Motor neuron (in vitro differentiated cells): ENCODE measurements at regions of chr4 and their contacts with region 1.

Region 1: GRCh38 chr4:86895692-86896488 is 3.7 kb upstream of the C4orf36 start:
- ATAC-seq: peak in 4 of 8 experiments; percentile 5 to 25 (median 14)
- H3K4me3 ChIP-seq: no peak overlapping the region
- H3K27ac ChIP-seq: no peak overlapping the region
- H3K4me1 ChIP-seq: peaks cover 2 to 7% of the 10 kb centered on the region in 2 donors

Region 2: GRCh38 chr4:86058621-86059020 is 837.3 kb before region 1 on chr4:
- in situ Hi-C with region 1: no loop called
- ATAC-seq: no peak
- H3K4me3 ChIP-seq: no peak overlapping the region
- H3K27ac ChIP-seq: no peak overlapping the region
- H3K4me1 ChIP-seq: no peaks in the 10 kb centered on the region

Region 3: DNA sequence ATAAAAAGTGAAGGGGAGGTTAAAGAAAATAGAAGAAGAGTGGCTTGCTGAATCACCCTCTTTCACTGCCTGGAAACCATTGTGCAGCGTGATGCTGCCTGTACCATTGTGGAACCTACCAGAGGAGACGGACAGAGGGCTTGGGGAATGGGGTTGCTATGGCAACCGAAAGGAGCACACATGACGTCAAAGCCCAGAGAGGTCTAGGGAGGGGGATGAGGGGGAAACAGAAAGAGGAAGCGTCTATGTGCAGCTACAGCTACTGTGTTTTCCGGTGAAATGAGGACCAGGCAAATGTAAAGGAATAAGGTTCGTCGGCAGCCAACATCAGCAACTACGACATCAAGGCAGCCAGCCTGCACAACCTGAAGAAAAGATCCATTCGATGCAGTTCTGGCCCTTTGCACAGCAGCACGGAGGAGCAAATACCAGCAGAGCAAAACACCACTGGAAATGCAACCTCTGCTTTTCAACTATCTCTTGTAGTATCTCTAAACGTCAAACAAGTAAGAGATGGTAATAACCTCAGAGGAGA is 535.9 kb before region 1 on chr4 and contains the start of gene MAPK10:
- in situ Hi-C with region 1: loop called in 1 of 9 experiments (anchors 25 kb)
- ATAC-seq: peak; percentile 71 to 98 (median 96)
- H3K4me3 ChIP-seq: peak within 1 kb of the TSS; percentile 39 to 62 (median 46)
- H3K27ac ChIP-seq: peak within 1 kb of the TSS; percentile 87 to 90
- H3K4me1 ChIP-seq: peaks cover 22 to 23% of the 10 kb centered on the region in 2 donors
- total RNA-seq, gene MAPK10: 1.2 to 104 (median 61.8) TPM

Region 4: GRCh38 chr4:86497980-86498862 is 397.7 kb before region 1 on chr4:
- in situ Hi-C with region 1: loop called (anchors 10 to 25 kb)
- ATAC-seq: peak; percentile 79 to 95 (median 86)
- H3K4me3 ChIP-seq: no peak overlapping the region
- H3K27ac ChIP-seq: no peak overlapping the region
- H3K4me1 ChIP-seq: no peaks in the 10 kb centered on the region

Region 5: DNA sequence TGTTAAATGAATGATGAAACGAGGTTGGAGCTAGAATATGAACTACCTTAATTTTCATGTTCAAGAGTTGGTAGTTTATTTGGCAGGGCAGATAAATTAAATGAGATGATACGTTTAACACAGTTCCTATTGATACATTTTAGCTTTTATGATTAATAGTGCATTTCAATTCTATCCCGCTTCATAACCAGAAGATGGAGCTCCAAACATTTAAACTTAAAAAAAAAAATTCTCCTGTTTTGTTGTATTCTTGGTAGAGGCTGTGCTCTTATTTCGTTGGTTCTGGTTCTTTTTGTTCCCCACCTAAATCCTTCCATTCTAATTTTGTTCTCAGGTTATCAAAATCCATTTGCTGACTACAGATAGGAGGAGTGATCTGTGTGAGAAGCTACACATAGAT is 373.5 kb before region 1 on chr4:
- in situ Hi-C with region 1: loop called in 3 of 9 experiments (anchors 10 to 25 kb)
- ATAC-seq: peak in 1 of 8 experiments; percentile 42
- H3K4me3 ChIP-seq: no peak overlapping the region
- H3K27ac ChIP-seq: no peak overlapping the region
- H3K4me1 ChIP-seq: no peaks in the 10 kb centered on the region